ENCODE measurements at regions of chr15 and their contacts with region 1.

Region 1: DNA sequence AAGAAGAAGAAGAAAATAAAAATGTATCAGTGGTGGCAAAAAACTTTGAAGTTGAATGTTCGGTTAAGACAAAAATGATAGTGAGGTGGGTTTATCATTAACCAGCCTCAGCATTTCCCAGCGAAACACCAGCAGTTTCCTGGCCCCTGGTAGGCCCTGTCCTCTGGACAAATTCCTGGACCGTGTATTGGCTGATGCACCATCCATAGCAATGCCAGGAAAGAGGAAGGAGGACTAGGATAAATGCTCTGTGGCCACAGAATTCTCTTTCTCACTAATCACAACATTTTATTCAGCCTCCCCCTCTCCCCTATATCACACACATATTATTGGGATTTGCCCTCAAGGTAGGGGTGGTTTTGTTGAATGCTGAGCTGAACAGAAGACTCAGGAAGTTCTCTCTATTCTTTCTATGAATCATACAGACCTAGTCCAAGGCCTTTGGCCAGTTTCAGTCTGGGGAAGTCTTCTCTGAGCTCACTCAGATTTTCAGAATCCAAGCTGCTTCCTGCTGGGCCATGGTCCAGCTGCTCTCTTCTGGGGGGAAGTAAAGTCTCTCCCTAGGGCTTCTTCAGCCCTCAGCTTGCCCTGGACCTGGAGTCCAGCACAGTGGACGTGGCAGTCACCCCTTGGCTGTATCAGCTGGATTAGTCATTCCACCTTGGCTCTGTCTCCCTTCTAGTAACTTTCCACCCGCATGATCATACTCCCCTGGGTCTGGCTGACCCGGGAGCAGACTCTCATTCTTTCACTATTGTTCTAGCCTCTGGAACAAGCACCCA is 27.6 kb downstream of the SLC28A1 start:
- DNase-seq: peak; percentile 89 to 98
- H3K4me3 ChIP-seq: no peak overlapping the region
- H3K27ac ChIP-seq: peak overlapping the region; percentile 83 to 98
- H3K4me1 ChIP-seq: peaks cover 32 to 56% of the 10 kb centered on the region in 2 donors
- H3K27me3 ChIP-seq: no peaks in the 10 kb centered on the region
- CTCF ChIP-seq: no peak

Region 2: GRCh38 chr15:84924074-84924731 is 12.1 kb after region 1 on chr15:
- intact Hi-C with region 1: loop called (anchors 2 kb)
- DNase-seq: no peak
- H3K4me3 ChIP-seq: no peak overlapping the region
- H3K27ac ChIP-seq: peak overlapping the region; percentile 46 to 69
- H3K4me1 ChIP-seq: peaks cover 3 to 21% of the 10 kb centered on the region in 2 donors
- H3K27me3 ChIP-seq: no peaks in the 10 kb centered on the region
- CTCF ChIP-seq: no peak